Activated B cell treated with CpG ODN at 0.5 μM for 24 hours (primary cell): ENCODE measurements at regions of chr10 and their contacts with region 1.

Region 1: DNA sequence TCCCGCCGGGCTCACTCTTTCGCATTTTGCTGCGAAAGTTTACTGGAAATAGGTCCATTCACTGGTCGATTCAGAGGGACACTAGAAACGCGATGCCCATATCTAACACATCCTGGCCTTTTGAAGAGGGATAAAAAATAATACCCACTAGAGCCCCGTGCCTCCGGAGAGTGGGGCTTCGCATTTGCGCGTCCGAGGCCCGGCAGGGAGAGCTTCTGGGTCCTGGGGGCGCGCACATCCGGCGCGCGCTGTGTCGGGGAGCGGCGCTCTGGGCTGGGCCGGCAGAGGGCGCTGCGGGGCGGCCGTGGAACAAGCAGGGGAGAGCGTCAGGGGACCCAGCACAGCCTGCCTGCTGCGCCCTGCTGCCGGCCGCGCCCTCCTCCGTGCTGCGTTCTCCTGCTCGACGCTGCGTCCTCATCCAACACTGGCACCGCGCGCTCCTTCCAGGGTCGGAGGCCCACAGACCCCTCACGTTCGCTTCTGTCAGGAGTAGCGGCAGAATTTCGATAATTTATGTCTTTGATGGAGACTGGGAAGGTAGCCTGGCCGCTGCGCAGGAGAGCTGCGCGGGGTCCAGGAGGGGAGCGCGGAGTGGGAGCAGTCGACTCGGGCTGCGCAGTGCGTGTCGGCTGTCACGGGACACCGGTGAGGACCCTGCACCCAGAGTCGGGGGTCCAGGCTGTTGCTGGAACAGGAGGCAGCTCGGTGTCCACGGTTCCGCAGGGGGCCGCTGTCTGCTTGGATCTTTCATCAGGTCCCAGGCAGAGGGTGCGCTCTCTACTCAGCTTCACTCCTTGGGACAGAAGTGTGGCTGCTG is 41.5 kb upstream of the ZNF32 start:
- DNase-seq: peak; percentile 69
- ATAC-seq: peak; percentile 97
- H3K4me3 Mint-ChIP-seq: peak overlapping the region; percentile 80
- H3K27ac Mint-ChIP-seq: no peak overlapping the region
- H3K4me1 Mint-ChIP-seq: peaks cover 14% of the 10 kb centered on the region
- H3K27me3 Mint-ChIP-seq: peaks cover 31% of the 10 kb centered on the region
- CTCF ChIP-seq: no peak

Region 2: GRCh38 chr10:44310762-44311562 is 620.8 kb after region 1 on chr10:
- CTCF ChIA-PET with region 1: no interaction called
- POLR2A ChIA-PET with region 1: no interaction called
- intact Hi-C with region 1: loop called (anchors 10 kb)
- DNase-seq: peak; percentile 36
- ATAC-seq: peak; percentile 82
- H3K4me3 Mint-ChIP-seq: peak overlapping the region; percentile 25
- H3K27ac Mint-ChIP-seq: no peak overlapping the region
- H3K4me1 Mint-ChIP-seq: peaks cover 4% of the 10 kb centered on the region
- H3K27me3 Mint-ChIP-seq: peaks cover 13% of the 10 kb centered on the region
- CTCF ChIP-seq: no peak

Region 3: GRCh38 chr10:44864637-44865288 is 1174.6 kb after region 1 on chr10:
- CTCF ChIA-PET with region 1: no interaction called
- POLR2A ChIA-PET with region 1: no interaction called
- intact Hi-C with region 1: loop called (anchors 5 kb)
- DNase-seq: peak; percentile 77
- ATAC-seq: peak; percentile 88
- H3K4me3 Mint-ChIP-seq: peak overlapping the region; percentile 87
- H3K27ac Mint-ChIP-seq: no peak overlapping the region
- H3K4me1 Mint-ChIP-seq: peaks cover 12% of the 10 kb centered on the region
- H3K27me3 Mint-ChIP-seq: peaks cover 56% of the 10 kb centered on the region
- CTCF ChIP-seq: peak; percentile 54